ENCODE measurements at regions of chr2 and their contacts with region 1.

Region 1: GRCh38 chr2:219104107-219105035 is 43.6 kb upstream of the IHH start:
- DNase-seq: peak; percentile 40
- H3K4me3 ChIP-seq: no peak overlapping the region
- H3K27me3 ChIP-seq: no peaks in the 10 kb centered on the region
- CTCF ChIP-seq: peak; percentile 80

Region 2: GRCh38 chr2:219010162-219010756 is 94.1 kb before region 1 on chr2:
- CTCF ChIA-PET with region 1: no interaction called
- POLR2A ChIA-PET with region 1: no interaction called
- DNase-seq: no peak
- H3K4me3 ChIP-seq: no peak overlapping the region
- H3K27me3 ChIP-seq: peaks cover 12% of the 10 kb centered on the region
- CTCF ChIP-seq: peak; percentile 36

Region 3: GRCh38 chr2:219087361-219087760 is 17.0 kb before region 1 on chr2:
- CTCF ChIA-PET with region 1: interaction called, 13 read pairs
- POLR2A ChIA-PET with region 1: no interaction called
- DNase-seq: no peak
- H3K4me3 ChIP-seq: no peak overlapping the region
- H3K27me3 ChIP-seq: no peaks in the 10 kb centered on the region
- CTCF ChIP-seq: no peak

Region 4: DNA sequence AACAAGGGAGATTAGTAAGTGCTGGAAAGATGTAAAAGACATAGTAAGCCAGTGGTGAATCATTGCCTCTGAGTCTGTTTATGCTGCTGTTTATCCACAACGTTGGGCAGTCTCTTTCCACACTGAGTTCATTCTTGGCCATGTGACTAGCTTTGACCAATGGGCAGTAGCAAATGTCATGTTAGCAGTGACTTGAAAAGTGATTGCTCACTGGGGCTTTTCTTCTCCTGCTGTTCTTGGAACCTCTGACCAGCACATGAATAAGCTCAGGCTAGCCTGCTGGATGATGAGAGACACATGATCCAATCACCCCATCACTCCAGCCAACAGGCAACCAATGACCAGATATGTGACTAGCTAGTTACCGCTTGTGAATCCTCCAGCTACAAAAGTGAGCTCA is 883.5 kb after region 1 on chr2:
- CTCF ChIA-PET with region 1: no interaction called
- POLR2A ChIA-PET with region 1: no interaction called
- DNase-seq: peak; percentile 63
- H3K4me3 ChIP-seq: no peak overlapping the region
- H3K27me3 ChIP-seq: no peaks in the 10 kb centered on the region
- CTCF ChIP-seq: no peak